Activated CD8-positive, alpha-beta memory T cell treated with anti-CD3 and anti-CD28 coated beads, Interleukin-2, amount 10 ng/mL, durations not matched to agents 7 days and 5 days (primary cell): ENCODE measurements at regions of chr14 and their contacts with region 1.

Region 1: GRCh38 chr14:103391048-103391447 is 5.8 kb downstream of the MARK3 start:
- DNase-seq: peak; percentile 71
- ATAC-seq: peak; percentile 67
- H3K4me3 Mint-ChIP-seq: no peak overlapping the region
- H3K27ac Mint-ChIP-seq: no peak overlapping the region
- H3K4me1 Mint-ChIP-seq: peaks cover 63% of the 10 kb centered on the region
- H3K27me3 Mint-ChIP-seq: no peaks in the 10 kb centered on the region

Region 2: GRCh38 chr14:103333754-103334643 is 57.0 kb before region 1 on chr14 and contains the start of gene EIF5:
- CTCF ChIA-PET with region 1: interaction called, 17 read pairs
- DNase-seq: peak; percentile 99
- ATAC-seq: peak; percentile 94
- H3K4me3 Mint-ChIP-seq: peak within 1 kb of the TSS; percentile 95
- H3K27ac Mint-ChIP-seq: peak within 1 kb of the TSS; percentile 92
- H3K4me1 Mint-ChIP-seq: peaks cover 40% of the 10 kb centered on the region
- H3K27me3 Mint-ChIP-seq: no peaks in the 10 kb centered on the region
- total RNA-seq, gene EIF5: 187 to 255 TPM

Region 3: DNA sequence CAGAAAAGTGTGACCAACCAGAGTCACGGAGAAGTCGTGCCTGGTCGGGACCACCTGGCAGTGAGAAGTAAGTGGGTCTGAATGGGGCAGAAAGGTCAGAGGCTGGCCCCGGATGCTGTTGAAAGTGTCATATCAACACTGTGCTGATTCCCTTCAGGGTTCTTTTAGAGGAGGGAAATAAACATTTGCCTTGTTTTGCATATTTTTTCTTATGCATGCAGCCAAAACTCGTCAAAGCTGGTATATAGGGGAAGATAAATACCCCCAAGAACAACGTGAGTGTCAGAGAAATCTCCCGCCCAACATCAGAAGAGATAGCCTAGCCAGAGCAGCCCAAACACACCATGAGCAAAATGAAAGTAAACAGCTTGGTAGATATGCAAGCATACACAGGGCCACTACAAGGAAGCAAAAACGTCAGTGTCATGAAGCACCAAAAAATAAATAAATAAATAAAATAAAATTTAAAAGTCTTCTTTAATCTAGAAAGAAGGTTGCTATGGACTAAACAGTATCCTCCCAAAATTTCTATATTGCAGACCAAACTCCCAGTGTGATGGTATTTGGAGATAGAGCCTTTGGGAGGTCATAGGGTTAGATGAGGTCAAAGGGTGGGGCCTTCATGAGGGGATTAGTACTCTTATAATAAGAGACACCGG is 34.9 kb before region 1 on chr14:
- CTCF ChIA-PET with region 1: interaction called, 10 read pairs
- DNase-seq: no peak
- ATAC-seq: peak; percentile 69
- H3K4me3 Mint-ChIP-seq: no peak overlapping the region
- H3K27ac Mint-ChIP-seq: peak overlapping the region; percentile 10
- H3K4me1 Mint-ChIP-seq: peaks cover 16% of the 10 kb centered on the region
- H3K27me3 Mint-ChIP-seq: peaks cover 5% of the 10 kb centered on the region

Region 4: DNA sequence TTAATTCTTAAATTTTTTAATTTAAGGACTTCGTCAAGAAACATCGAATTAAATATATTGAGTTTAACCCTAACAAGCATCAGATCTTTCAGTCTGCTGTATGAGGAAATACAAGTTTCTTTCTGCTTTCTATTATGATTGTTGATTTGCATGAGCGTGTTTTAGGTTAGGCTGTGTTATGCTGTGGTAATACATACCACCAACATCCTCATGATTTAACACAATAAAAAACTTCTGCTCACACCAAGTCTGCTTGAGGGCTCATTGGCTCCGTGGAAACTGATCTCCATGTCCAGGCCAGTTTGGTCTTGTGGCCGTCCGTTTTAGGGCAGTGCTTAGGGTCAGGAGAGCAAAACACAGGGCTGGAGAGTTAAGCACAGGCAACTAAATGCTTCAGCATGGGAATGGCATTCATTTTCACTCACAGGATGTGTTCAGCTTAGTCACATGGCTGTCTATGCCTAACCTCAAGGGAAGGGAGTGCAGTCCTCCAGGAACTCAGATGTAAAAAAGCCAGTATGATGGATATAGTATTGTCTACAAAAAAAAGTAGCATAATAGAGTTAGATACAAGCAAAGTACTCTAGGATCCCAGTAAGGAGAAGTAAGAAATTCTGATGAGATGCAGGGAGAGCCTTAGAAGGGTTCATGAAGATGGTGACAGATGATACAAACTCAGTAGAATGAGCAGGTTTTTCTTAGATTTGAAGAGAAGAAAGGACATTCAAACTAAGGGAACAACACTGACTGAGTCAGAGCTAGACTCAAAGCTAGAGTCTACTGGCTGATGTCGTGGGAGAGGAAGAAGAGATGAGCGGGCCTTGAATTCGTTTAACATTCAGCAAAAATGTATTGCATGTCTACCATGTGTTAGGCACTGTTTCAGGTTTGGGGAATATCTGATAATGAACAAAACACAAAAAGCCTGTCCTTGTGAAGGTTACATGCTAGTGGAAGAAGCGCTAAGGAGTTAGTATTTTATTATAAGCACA is 10.5 kb after region 1 on chr14:
- CTCF ChIA-PET with region 1: interaction called, 30 read pairs
- DNase-seq: no peak
- ATAC-seq: peak; percentile 77
- H3K4me3 Mint-ChIP-seq: peak overlapping the region; percentile 7
- H3K27ac Mint-ChIP-seq: peak overlapping the region; percentile 76
- H3K4me1 Mint-ChIP-seq: peaks cover 55% of the 10 kb centered on the region
- H3K27me3 Mint-ChIP-seq: no peaks in the 10 kb centered on the region

Region 5: GRCh38 chr14:103416916-103417315 is 25.9 kb after region 1 on chr14:
- CTCF ChIA-PET with region 1: interaction called, 13 read pairs
- DNase-seq: no peak
- ATAC-seq: no peak
- H3K4me3 Mint-ChIP-seq: no peak overlapping the region
- H3K27ac Mint-ChIP-seq: no peak overlapping the region
- H3K4me1 Mint-ChIP-seq: peaks cover 24% of the 10 kb centered on the region
- H3K27me3 Mint-ChIP-seq: no peaks in the 10 kb centered on the region